CD8-positive, alpha-beta memory T cell (primary cell): ENCODE measurements at regions of chr19 and their contacts with region 1.

Region 1: GRCh38 chr19:12333162-12334159 is at the start of gene ZNF563:
- DNase-seq: peak; percentile 91 to 97 (median 93)
- H3K4me3 ChIP-seq: peak within 1 kb of the TSS; percentile 79
- H3K4me3 Mint-ChIP-seq: peak within 1 kb of the TSS; percentile 89 to 100 (median 99)
- H3K27ac ChIP-seq: peak within 1 kb of the TSS; percentile 60
- H3K27ac Mint-ChIP-seq: peak within 1 kb of the TSS; percentile 96 to 100 (median 98)
- H3K4me1 ChIP-seq: peaks cover 23% of the 10 kb centered on the region
- H3K4me1 Mint-ChIP-seq: peaks cover 35 to 44% (median 37%) of the 10 kb centered on the region in 3 donors
- H3K27me3 ChIP-seq: no peaks in the 10 kb centered on the region
- H3K27me3 Mint-ChIP-seq: peaks cover 0 to 1% of the 10 kb centered on the region in 2 donors
- total RNA-seq, gene ZNF563: 2.8 to 3.5 TPM

Region 2: GRCh38 chr19:12162882-12163806 is 170.3 kb before region 1 on chr19 and contains the start of gene ZNF136:
- CTCF ChIA-PET with region 1: no interaction called
- POLR2A ChIA-PET with region 1: interaction called, 12 read pairs
- DNase-seq: peak; percentile 88 to 96 (median 90)
- H3K4me3 ChIP-seq: peak within 1 kb of the TSS; percentile 69
- H3K4me3 Mint-ChIP-seq: peak within 1 kb of the TSS; percentile 86 to 100 (median 97)
- H3K27ac ChIP-seq: peak within 1 kb of the TSS; percentile 90
- H3K27ac Mint-ChIP-seq: peak within 1 kb of the TSS; percentile 66 to 100 (median 99)
- H3K4me1 ChIP-seq: peaks cover 24% of the 10 kb centered on the region
- H3K4me1 Mint-ChIP-seq: peaks cover 41 to 53% (median 51%) of the 10 kb centered on the region in 3 donors
- H3K27me3 ChIP-seq: no peaks in the 10 kb centered on the region
- H3K27me3 Mint-ChIP-seq: peaks cover 0 to under 1% of the 10 kb centered on the region in 2 donors
- total RNA-seq, gene ZNF136: 13.0 to 16.0 TPM

Region 3: DNA sequence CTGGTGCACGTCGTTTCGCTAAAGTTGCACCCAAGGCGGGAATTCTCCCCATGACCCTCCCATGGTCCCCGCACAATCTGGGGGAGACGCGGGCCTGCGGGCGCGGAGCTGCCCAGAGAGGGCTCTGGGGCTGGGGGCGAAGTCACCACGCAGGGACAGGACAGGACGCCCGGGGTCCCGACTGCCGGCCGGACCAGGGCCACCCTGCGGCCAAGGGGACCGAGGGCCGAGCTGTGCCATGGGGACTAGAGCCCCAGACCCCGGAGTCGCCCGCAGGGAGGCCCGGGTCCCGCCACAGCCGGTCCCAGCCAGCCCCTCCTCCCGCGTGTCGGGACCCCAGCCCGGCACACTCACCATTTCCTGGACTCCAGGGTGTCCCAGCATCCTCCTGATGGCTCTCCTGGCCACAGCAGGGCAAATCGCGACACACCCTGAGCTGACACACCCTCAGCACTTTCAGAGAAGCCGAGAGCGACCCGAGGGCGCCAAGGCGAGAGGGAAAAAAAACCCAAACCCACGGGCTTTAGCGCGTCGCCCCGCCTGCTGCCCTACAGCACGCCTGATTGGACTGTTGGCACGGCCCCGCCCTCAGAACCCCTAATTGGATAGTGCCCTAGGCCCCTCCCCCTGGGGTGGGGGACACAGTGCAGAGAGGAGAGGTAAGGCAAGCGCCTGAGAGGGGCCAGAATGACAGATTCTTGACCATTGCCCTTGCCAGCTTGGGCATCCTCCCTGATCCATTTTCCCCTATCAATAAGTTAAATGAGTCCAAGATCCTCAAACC is 67.3 kb before region 1 on chr19:
- CTCF ChIA-PET with region 1: no interaction called
- POLR2A ChIA-PET with region 1: no interaction called
- DNase-seq: no peak
- H3K4me3 ChIP-seq: no peak overlapping the region
- H3K4me3 Mint-ChIP-seq: no peak overlapping the region
- H3K27ac ChIP-seq: no peak overlapping the region
- H3K27ac Mint-ChIP-seq: no peak overlapping the region
- H3K4me1 ChIP-seq: no peaks in the 10 kb centered on the region
- H3K4me1 Mint-ChIP-seq: no peaks in the 10 kb centered on the region
- H3K27me3 ChIP-seq: no peaks in the 10 kb centered on the region
- H3K27me3 Mint-ChIP-seq: no peaks in the 10 kb centered on the region

Region 4: GRCh38 chr19:12294249-12295158 is 39.0 kb before region 1 on chr19 and contains the start of gene ZNF44:
- CTCF ChIA-PET with region 1: interaction called, 9 read pairs
- POLR2A ChIA-PET with region 1: interaction called, 21 read pairs
- DNase-seq: peak; percentile 88 to 96 (median 92)
- H3K4me3 ChIP-seq: peak within 1 kb of the TSS; percentile 84
- H3K4me3 Mint-ChIP-seq: peak within 1 kb of the TSS; percentile 95 to 100 (median 99)
- H3K27ac ChIP-seq: peak within 1 kb of the TSS; percentile 70
- H3K27ac Mint-ChIP-seq: peak within 1 kb of the TSS; percentile 84 to 99 (median 98)
- H3K4me1 ChIP-seq: peaks cover 23% of the 10 kb centered on the region
- H3K4me1 Mint-ChIP-seq: peaks cover 40 to 45% (median 45%) of the 10 kb centered on the region in 3 donors
- H3K27me3 ChIP-seq: no peaks in the 10 kb centered on the region
- H3K27me3 Mint-ChIP-seq: peaks cover 0 to 2% of the 10 kb centered on the region in 2 donors
- total RNA-seq, gene ZNF44: 12.3 to 12.6 TPM

Region 5: DNA sequence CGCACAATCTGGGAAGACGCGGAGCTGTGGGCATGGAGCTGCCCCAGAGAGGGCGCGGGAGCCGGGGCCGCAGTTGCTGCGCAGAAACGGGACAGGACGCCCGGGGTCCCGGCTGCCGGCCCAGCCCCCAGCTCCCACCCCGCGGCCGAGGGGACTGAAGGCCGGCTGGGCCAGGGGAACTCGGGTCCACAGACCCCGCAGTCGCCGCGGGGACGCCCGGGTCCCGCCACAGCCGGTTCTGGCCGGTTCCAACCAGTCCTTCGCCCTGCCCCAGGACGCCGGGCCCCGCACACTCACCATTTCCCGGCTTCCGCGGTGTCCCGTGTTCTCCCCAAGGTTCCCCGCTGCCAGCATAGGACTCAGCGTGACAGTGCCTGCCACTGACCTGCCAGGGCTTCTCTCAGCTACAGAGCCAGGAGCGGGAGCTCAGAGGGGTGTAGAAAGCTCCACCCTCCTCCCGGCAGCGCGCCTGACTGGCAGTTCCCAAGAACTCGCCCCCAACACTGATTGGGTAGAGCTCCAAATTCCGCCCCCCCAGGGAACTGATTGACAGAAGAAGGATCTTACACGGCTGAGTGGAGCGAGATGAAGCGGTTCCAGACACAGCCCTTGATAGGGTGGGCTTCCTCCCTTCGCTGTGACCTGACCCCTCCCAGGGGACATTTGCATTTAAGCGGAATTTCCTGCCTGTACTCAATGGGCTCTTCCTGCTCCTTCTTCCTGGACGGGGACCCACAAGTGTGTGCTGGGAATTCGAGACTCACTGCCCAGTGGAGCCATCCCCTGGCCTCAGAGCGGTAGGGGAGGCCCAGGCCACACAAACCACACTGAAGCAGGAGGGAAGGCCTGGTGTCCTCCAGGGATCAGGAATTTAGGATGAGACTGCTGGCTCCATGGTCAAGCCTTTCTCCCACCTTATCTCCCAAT is 32.0 kb after region 1 on chr19 and contains the start of gene ZNF442:
- CTCF ChIA-PET with region 1: interaction called, 6 read pairs
- POLR2A ChIA-PET with region 1: interaction called, 18 read pairs
- DNase-seq: peak; percentile 57 to 87 (median 76)
- H3K4me3 ChIP-seq: peak within 1 kb of the TSS; percentile 63
- H3K4me3 Mint-ChIP-seq: peak within 1 kb of the TSS; percentile 87 to 97 (median 95)
- H3K27ac ChIP-seq: peak within 1 kb of the TSS; percentile 69
- H3K27ac Mint-ChIP-seq: peak within 1 kb of the TSS; percentile 50 to 92 (median 80)
- H3K4me1 ChIP-seq: peaks cover 11% of the 10 kb centered on the region
- H3K4me1 Mint-ChIP-seq: peaks cover 21 to 25% (median 22%) of the 10 kb centered on the region in 3 donors
- H3K27me3 ChIP-seq: no peaks in the 10 kb centered on the region
- H3K27me3 Mint-ChIP-seq: no peaks in the 10 kb centered on the region
- total RNA-seq, gene ZNF442: 2.2 to 2.5 TPM